A673 (cell line): ENCODE measurements at regions of chr9 and their contacts with region 1.

Region 1: DNA sequence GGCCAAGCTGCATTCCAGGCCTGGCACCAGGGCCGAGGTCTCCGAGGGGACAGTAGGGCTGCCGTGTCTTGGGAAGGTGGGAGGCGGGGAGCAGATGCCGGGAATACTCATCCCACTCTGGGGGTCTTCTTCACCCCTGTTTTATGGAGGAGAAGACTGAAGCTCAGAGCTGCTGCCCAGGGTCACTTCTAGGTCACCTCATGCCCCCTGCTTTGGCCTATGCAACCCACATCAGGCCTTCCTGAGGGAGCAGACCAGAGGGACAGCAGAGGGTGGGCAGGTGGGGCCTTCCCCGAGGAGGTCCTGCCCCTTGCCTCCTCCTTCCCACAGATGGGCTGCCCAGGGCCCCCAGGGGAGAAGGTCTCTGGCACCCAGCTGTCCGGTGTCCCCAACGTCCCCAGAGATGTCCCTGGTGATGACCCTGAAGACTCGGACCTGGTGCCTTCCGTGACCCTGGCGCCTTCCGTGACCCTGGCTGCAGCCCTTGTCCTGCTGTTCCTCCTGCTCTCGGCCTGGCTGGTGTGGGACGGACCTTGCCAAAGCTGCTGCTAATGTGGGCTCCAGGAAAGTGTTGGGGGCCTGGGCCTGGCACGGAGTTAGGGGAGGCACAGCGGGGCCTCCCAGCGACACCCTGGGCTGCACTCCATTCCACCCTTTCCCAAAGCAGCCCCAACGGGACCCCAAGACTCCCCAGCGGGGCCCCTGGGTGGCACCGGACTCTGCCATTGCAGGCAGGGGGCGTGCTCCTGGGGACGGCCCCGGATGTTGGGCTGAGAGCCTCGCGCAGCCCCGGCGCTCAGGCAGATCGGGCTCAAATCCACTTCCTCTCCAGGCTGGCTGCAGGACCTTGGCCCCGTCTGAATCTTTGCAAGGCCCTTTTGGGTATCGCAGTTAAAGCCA is 6.7 kb upstream of the SLC2A6 start:
- DNase-seq: no peak
- H3K4me3 ChIP-seq: no peak overlapping the region
- H3K27ac ChIP-seq: no peak overlapping the region
- H3K4me1 ChIP-seq: peaks cover 4% of the 10 kb centered on the region
- H3K27me3 ChIP-seq: no peaks in the 10 kb centered on the region
- CTCF ChIP-seq: no peak

Region 2: DNA sequence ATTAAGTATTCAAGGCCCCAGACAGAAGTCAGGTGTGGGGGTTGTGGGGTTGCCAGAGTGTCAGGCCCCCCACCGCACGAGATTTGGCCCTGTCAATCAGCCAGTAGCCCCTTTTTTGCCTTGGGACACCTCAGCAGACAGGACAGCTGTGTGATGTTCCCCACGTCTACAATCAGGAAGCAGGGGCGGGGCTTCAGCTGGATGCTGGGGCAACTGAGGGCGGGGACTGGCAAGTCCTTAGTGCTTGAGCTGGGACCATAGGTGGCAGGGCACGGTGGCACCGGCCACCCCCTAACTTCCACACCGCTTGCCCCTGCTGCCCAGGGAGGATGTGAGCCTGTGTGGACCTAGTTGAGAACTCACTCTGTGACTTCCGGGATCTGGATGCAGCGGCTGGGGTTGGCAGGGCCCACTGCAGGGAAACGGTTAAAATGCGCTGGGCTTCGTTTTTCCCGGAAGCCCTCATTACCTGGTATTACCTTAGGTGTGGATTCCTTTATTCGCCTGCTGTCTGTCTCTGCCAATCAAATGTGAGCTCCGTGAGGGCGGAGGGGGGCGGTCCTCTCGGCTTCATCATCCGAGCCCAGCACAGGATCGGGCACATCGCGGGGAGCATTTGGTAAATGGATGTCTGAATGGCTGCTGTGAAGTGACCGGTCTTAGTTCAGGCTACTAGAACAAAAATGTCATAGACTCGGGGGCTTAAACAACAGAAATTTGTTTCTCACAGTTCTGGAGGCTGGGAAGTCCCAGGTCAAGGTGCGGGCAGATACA is 462.3 kb before region 1 on chr9:
- CTCF ChIA-PET with region 1: interaction called, 3 read pairs
- POLR2A ChIA-PET with region 1: no interaction called
- intact Hi-C with region 1: loop called (anchors 1 kb)
- DNase-seq: peak; percentile 54
- H3K4me3 ChIP-seq: no peak overlapping the region
- H3K27ac ChIP-seq: no peak overlapping the region
- H3K4me1 ChIP-seq: no peaks in the 10 kb centered on the region
- H3K27me3 ChIP-seq: no peaks in the 10 kb centered on the region
- CTCF ChIP-seq: no peak

Region 3: GRCh38 chr9:133225171-133226011 is 260.2 kb before region 1 on chr9:
- CTCF ChIA-PET with region 1: no interaction called
- POLR2A ChIA-PET with region 1: no interaction called
- intact Hi-C with region 1: no loop called
- DNase-seq: no peak
- H3K4me3 ChIP-seq: no peak overlapping the region
- H3K27ac ChIP-seq: no peak overlapping the region
- H3K4me1 ChIP-seq: no peaks in the 10 kb centered on the region
- H3K27me3 ChIP-seq: no peaks in the 10 kb centered on the region
- CTCF ChIP-seq: no peak

Region 4: GRCh38 chr9:133356391-133357091 is 129.1 kb before region 1 on chr9 and contains the starts of genes SURF1 and SURF2:
- CTCF ChIA-PET with region 1: no interaction called
- POLR2A ChIA-PET with region 1: interaction called, 3 read pairs
- intact Hi-C with region 1: loop called (anchors 1 kb)
- DNase-seq: peak; percentile 93
- H3K4me3 ChIP-seq: peak within 1 kb of the TSS; percentile 93
- H3K27ac ChIP-seq: peak within 1 kb of the TSS; percentile 76
- H3K4me1 ChIP-seq: peaks cover 19% of the 10 kb centered on the region
- H3K27me3 ChIP-seq: no peaks in the 10 kb centered on the region
- CTCF ChIP-seq: no peak
- total RNA-seq, gene SURF1: 41.6 and 53.3 TPM in 2 replicates
- total RNA-seq, gene SURF2: 35.0 and 42.0 TPM in 2 replicates

Region 5: GRCh38 chr9:133406480-133407307 is 78.9 kb before region 1 on chr9:
- CTCF ChIA-PET with region 1: no interaction called
- POLR2A ChIA-PET with region 1: no interaction called
- intact Hi-C with region 1: loop called (anchors 2 kb)
- DNase-seq: peak; percentile 80
- H3K4me3 ChIP-seq: no peak overlapping the region
- H3K27ac ChIP-seq: no peak overlapping the region
- H3K4me1 ChIP-seq: no peaks in the 10 kb centered on the region
- H3K27me3 ChIP-seq: no peaks in the 10 kb centered on the region
- CTCF ChIP-seq: peak; percentile 94